ENCODE measurements at regions of chr16 and their contacts with region 1.

Region 1: GRCh38 chr16:50273681-50274325 is 7.5 kb downstream of the ADCY7 start:
- DNase-seq: peak; percentile 70
- H3K4me3 Mint-ChIP-seq: peak overlapping the region; percentile 91
- H3K27ac Mint-ChIP-seq: peak overlapping the region; percentile 99
- H3K4me1 Mint-ChIP-seq: peaks cover 94% of the 10 kb centered on the region
- H3K27me3 Mint-ChIP-seq: no peaks in the 10 kb centered on the region

Region 2: GRCh38 chr16:50121721-50122445 is 151.9 kb before region 1 on chr16:
- CTCF ChIA-PET with region 1: no interaction called
- intact Hi-C with region 1: loop called (anchors 1 kb)
- DNase-seq: peak; percentile 93
- H3K4me3 Mint-ChIP-seq: peak overlapping the region; percentile 22
- H3K27ac Mint-ChIP-seq: peak overlapping the region; percentile 75
- H3K4me1 Mint-ChIP-seq: peaks cover 20% of the 10 kb centered on the region
- H3K27me3 Mint-ChIP-seq: no peaks in the 10 kb centered on the region

Region 3: GRCh38 chr16:50245417-50246298 is 28.1 kb before region 1 on chr16:
- CTCF ChIA-PET with region 1: no interaction called
- intact Hi-C with region 1: loop called (anchors 2 kb)
- DNase-seq: peak; percentile 79
- H3K4me3 Mint-ChIP-seq: peak overlapping the region; percentile 72
- H3K27ac Mint-ChIP-seq: no peak overlapping the region
- H3K4me1 Mint-ChIP-seq: peaks cover 10% of the 10 kb centered on the region
- H3K27me3 Mint-ChIP-seq: no peaks in the 10 kb centered on the region

Region 4: DNA sequence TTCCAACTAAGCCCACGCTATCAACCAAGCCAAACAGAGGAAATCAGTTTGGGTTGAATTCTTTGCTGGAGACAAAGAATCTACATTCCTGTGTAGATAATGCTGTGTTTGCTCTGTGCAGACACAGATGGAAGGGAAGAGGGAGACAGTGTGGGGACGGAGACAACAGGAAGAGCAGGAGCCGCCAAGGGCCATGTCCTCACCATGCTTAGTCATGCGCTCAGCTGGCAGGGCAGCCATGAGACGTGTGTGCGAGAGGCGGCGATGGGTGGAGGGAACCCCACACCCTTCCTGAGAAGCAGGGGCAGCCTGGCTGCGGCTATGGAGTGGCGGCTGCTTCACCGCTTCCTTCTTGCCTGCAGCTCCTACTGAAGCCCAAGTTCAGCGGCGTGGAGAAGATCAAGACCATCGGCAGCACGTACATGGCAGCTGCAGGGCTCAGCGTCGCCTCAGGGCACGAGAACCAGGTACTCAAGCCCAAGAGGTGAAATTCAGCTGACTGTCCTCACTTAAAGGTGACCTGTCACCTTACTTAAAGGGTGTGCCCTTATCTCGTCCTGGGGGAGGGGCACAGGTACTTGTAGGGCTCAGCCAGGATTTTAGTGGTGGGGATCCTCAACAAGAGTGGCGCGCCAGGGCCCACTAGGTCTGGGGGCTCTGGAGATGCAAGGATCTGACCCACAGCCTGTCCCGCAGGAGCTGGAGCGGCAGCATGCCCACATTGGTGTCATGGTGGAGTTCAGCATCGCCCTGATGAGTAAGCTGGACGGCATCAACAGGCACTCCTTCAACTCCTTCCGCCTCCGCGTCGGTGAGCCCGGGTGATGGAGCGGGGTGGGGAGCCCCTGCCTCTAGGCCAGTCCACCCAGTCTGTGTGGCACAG is 40.0 kb after region 1 on chr16:
- CTCF ChIA-PET with region 1: no interaction called
- intact Hi-C with region 1: no loop called
- DNase-seq: peak; percentile 67
- H3K4me3 Mint-ChIP-seq: no peak overlapping the region
- H3K27ac Mint-ChIP-seq: peak overlapping the region; percentile 79
- H3K4me1 Mint-ChIP-seq: peaks cover 16% of the 10 kb centered on the region
- H3K27me3 Mint-ChIP-seq: no peaks in the 10 kb centered on the region

Region 5: GRCh38 chr16:50335196-50335958 is 61.6 kb after region 1 on chr16:
- CTCF ChIA-PET with region 1: no interaction called
- intact Hi-C with region 1: loop called (anchors 1 kb)
- DNase-seq: peak; percentile 73
- H3K4me3 Mint-ChIP-seq: peak overlapping the region; percentile 44
- H3K27ac Mint-ChIP-seq: peak overlapping the region; percentile 96
- H3K4me1 Mint-ChIP-seq: peaks cover 66% of the 10 kb centered on the region
- H3K27me3 Mint-ChIP-seq: no peaks in the 10 kb centered on the region

Region 6: GRCh38 chr16:50548125-50548908 is 274.5 kb after region 1 on chr16 and contains the start of gene NKD1:
- CTCF ChIA-PET with region 1: no interaction called
- intact Hi-C with region 1: loop called (anchors 5 kb)
- DNase-seq: peak; percentile 68
- H3K4me3 Mint-ChIP-seq: peak within 1 kb of the TSS; percentile 85
- H3K27ac Mint-ChIP-seq: no peak within 1 kb of the TSS
- H3K4me1 Mint-ChIP-seq: peaks cover 18% of the 10 kb centered on the region
- H3K27me3 Mint-ChIP-seq: no peaks in the 10 kb centered on the region
- total RNA-seq, gene NKD1: 2.6 to 3.2 TPM

Region 7: DNA sequence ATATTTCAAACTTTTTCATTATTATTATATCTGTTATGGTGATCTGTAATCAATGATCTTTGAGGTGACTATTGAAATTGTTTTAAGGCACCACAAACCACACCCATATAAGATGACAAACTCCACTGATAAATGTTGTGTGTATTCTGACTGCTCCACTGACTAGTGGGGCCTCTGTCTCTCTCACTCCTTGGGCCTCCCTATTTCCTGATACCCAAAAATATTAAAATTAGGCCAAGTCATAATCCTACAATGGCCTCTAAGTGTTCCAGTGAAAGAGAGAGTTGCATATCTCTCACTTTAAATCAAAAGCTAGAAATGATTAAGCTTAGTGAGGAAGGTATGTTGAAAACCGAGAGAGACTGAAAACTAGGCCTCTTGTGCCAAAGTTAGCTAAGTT is 491.5 kb after region 1 on chr16:
- CTCF ChIA-PET with region 1: no interaction called
- intact Hi-C with region 1: loop called (anchors 1 kb)
- DNase-seq: peak; percentile 23
- H3K4me3 Mint-ChIP-seq: peak overlapping the region; percentile 14
- H3K27ac Mint-ChIP-seq: peak overlapping the region; percentile 79
- H3K4me1 Mint-ChIP-seq: peaks cover 89% of the 10 kb centered on the region
- H3K27me3 Mint-ChIP-seq: no peaks in the 10 kb centered on the region

Measured in activated naive CD4-positive, alpha-beta T cell treated with anti-CD3 and anti-CD28 coated beads for 36 hours (primary cell).